Caco-2 (cell line): ENCODE measurements at regions of chr7 and their contacts with region 1.

Region 1: DNA sequence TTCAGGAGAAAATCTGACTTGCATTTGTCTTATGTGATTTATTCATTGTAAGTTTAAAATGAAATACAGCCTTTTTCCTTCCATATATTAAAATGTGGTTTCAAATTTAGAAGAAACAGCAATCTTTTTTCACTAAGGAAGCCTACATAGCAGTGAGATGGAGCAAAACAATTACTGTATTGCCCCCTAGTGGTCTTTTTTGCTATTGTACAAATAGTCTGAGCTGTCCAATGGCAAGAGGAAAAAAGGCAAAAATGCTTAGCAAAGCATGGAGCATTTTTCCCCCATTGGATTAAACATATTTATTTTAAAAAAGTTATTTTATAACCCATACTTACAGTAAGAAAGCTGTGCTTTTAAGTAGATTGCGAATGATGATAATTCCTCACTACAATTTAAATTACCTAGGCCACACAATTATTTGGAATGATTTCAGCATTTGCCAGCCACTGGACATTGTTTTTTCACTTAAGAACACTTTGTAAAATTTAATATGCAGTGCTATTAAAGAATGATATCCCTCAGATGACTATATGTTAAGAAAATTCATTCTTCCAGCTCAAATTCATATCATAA is 119.5 kb downstream of the CPED1 start:
- DNase-seq: peak in 1 of 2 experiments; percentile 66
- H3K4me3 ChIP-seq: no peak overlapping the region
- H3K4me3 Mint-ChIP-seq: no peak overlapping the region
- H3K27ac Mint-ChIP-seq: no peak overlapping the region
- H3K4me1 ChIP-seq: peaks cover 7% of the 10 kb centered on the region; the same call in 1 of the 2 replicates
- H3K4me1 Mint-ChIP-seq: peaks cover 7% of the 10 kb centered on the region
- H3K27me3 ChIP-seq: no peaks in the 10 kb centered on the region
- H3K27me3 Mint-ChIP-seq: peaks cover 10% of the 10 kb centered on the region
- CTCF ChIP-seq: peak; percentile 69 to 76

Region 2: DNA sequence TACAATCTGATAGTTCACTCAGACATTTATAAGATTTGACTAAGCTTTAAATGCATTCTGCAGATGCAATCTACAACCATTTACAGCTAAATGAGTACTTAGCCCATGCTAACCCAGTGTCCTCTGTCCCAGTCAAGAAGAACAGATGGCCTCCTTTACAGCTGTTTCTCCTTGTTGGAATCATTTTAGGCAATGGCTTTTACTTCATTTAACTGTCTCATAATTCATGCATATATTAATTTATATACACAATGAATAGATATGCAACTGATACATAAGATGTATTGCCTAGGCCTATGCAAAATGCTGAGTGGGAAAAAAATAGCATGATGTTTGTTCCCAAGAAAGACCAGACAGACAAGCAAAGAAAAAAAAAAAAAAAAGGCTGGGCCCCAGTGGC is 332.3 kb before region 1 on chr7:
- CTCF ChIA-PET with region 1: no interaction called
- POLR2A ChIA-PET with region 1: no interaction called
- intact Hi-C with region 1: no loop called
- DNase-seq: no peak
- H3K4me3 ChIP-seq: no peak overlapping the region
- H3K4me3 Mint-ChIP-seq: no peak overlapping the region
- H3K27ac Mint-ChIP-seq: no peak overlapping the region
- H3K4me1 ChIP-seq: no peaks in the 10 kb centered on the region
- H3K4me1 Mint-ChIP-seq: no peaks in the 10 kb centered on the region
- H3K27me3 ChIP-seq: no peaks in the 10 kb centered on the region
- H3K27me3 Mint-ChIP-seq: no peaks in the 10 kb centered on the region
- CTCF ChIP-seq: no peak

Region 3: GRCh38 chr7:120792091-120792860 is 315.7 kb before region 1 on chr7:
- CTCF ChIA-PET with region 1: interaction called, 14 read pairs
- POLR2A ChIA-PET with region 1: no interaction called
- intact Hi-C with region 1: loop called (anchors 1 kb)
- DNase-seq: peak; percentile 77 to 79
- H3K4me3 ChIP-seq: no peak overlapping the region
- H3K4me3 Mint-ChIP-seq: no peak overlapping the region
- H3K27ac Mint-ChIP-seq: no peak overlapping the region
- H3K4me1 ChIP-seq: no peaks in the 10 kb centered on the region
- H3K4me1 Mint-ChIP-seq: no peaks in the 10 kb centered on the region
- H3K27me3 ChIP-seq: no peaks in the 10 kb centered on the region
- H3K27me3 Mint-ChIP-seq: peaks cover 4% of the 10 kb centered on the region
- CTCF ChIP-seq: peak; percentile 89 to 96

Region 4: DNA sequence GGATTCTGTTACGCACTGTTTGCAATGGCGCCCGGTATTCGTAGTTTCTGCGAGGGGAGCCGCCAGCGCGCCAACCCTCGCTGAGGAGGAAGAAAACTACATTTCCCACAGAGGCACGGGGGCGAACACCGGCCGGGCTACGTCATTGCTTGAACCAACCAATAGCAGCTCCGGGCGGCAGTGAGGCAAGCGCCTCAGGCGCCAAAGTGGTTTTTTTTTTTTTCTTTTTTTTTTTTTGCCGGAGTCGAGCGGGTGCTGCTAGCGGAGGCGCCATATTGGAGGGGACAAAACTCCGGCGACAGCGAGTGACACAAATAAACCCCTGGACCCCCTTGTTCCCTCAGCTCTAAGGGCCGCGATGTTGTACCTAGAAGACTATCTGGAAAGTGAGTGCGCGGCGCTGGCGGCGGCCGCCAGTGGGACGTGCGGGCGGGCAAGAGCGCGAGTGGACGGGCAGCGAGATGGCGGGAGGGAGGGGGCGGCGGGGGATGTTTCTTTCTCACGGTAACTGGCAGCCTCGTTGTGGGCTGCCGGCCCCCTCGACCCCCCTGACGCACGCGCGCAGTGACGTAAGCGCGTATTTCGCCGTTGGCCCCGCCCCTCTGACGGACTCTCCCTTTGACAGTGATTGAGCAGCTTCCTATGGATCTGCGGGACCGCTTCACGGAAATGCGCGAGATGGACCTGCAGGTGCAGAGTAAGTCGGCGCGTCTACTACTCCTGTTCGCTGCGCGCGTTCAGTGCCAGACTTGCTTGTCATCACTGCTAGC is 157.3 kb before region 1 on chr7 and contains the start of gene ING3:
- CTCF ChIA-PET with region 1: interaction called, 3 read pairs
- POLR2A ChIA-PET with region 1: no interaction called
- intact Hi-C with region 1: loop called (anchors 1 kb)
- DNase-seq: peak; percentile 97
- H3K4me3 ChIP-seq: peak within 1 kb of the TSS; percentile 85
- H3K4me3 Mint-ChIP-seq: peak within 1 kb of the TSS; percentile 96
- H3K27ac Mint-ChIP-seq: peak within 1 kb of the TSS; percentile 100
- H3K4me1 ChIP-seq: no peaks in the 10 kb centered on the region
- H3K4me1 Mint-ChIP-seq: peaks cover 9% of the 10 kb centered on the region
- H3K27me3 ChIP-seq: no peaks in the 10 kb centered on the region; the same call in 1 of the 2 replicates
- H3K27me3 Mint-ChIP-seq: peaks cover 4% of the 10 kb centered on the region
- CTCF ChIP-seq: no peak
- total RNA-seq, gene ING3: 13.7 and 14.6 TPM in 2 replicates

Region 5: GRCh38 chr7:121061677-121062582 is 46.1 kb before region 1 on chr7:
- CTCF ChIA-PET with region 1: no interaction called
- POLR2A ChIA-PET with region 1: no interaction called
- intact Hi-C with region 1: no loop called
- DNase-seq: no peak
- H3K4me3 ChIP-seq: no peak overlapping the region
- H3K4me3 Mint-ChIP-seq: no peak overlapping the region
- H3K27ac Mint-ChIP-seq: no peak overlapping the region
- H3K4me1 ChIP-seq: no peaks in the 10 kb centered on the region
- H3K4me1 Mint-ChIP-seq: no peaks in the 10 kb centered on the region
- H3K27me3 ChIP-seq: no peaks in the 10 kb centered on the region
- H3K27me3 Mint-ChIP-seq: no peaks in the 10 kb centered on the region
- CTCF ChIP-seq: no peak

Region 6: DNA sequence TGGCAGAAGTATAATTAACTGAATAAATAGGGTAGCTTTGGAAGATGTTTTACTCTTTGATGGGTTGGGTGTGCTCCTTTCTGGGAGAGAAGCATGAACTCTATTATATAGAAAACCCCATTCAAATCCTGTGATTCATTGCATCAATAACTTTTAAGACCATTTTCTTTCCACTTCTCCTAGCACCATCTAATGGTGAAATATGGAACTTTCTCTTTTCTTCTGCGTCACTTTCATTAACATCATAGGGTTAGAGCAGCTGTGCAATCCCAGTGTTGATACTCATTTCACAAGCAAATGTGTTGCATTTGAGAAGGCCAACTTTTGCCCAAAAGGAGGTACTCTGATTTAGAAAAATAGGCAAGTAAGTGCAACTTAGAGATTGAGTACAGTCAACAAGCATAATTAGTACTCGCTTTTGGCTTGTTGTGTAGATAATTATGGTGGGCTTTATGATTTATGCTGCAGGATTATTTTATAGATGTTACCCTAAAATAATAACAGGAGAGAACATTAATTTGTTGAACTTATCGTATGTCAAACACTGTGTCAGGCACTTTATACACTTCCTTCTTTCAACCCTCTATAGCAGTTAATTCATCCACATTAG is 26.6 kb before region 1 on chr7:
- CTCF ChIA-PET with region 1: interaction called, 3 read pairs
- POLR2A ChIA-PET with region 1: no interaction called
- intact Hi-C with region 1: loop called (anchors 2 kb)
- DNase-seq: peak in 1 of 2 experiments; percentile 52
- H3K4me3 ChIP-seq: no peak overlapping the region
- H3K4me3 Mint-ChIP-seq: no peak overlapping the region
- H3K27ac Mint-ChIP-seq: no peak overlapping the region
- H3K4me1 ChIP-seq: peaks cover 5% of the 10 kb centered on the region; the same call in 1 of the 2 replicates
- H3K4me1 Mint-ChIP-seq: peaks cover 7% of the 10 kb centered on the region
- H3K27me3 ChIP-seq: no peaks in the 10 kb centered on the region
- H3K27me3 Mint-ChIP-seq: no peaks in the 10 kb centered on the region
- CTCF ChIP-seq: peak; percentile 62 to 64